Stomach (tissue), 19 donors: ENCODE measurements at regions of chr2 and their contacts with region 1.

Region 1: DNA sequence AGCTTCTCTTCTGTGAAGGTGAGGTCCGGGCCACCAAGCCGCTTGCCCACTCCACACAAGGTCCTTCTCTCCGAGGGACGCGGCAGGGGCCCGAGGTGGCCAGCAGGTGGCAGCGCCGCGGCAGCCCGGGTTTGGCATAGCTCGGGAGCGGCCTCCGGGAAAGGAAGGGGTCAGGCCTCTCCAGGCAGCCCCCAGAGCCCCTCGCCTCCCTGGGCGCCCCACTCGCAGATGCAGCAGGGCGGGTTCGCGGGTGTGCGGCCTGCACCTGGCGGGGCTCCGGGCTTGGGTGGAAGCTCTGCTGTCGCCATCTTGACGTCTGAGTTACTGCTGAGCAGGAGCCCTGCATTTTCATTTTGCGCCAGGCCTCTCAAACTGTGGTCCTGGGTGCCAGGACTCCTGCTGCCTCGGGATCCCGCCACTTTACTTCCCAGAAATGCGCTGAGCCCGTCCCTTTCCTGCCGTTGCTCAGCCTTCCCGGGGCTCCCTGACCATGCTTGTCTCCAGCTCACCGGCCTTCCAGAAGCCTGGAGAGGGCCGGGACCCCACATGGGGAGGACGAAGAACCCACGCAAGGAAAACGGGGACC is 18.6 kb upstream of the NCL start:
- DNase-seq: peak; percentile 80 to 89
- H3K4me3 ChIP-seq: peak overlapping the region; percentile 40 to 59 (median 44)
- H3K27ac ChIP-seq: peak overlapping the region; percentile 62 to 83 (median 72)
- H3K4me1 ChIP-seq: peaks cover 3 to 18% (median 13%) of the 10 kb centered on the region in 4 donors
- H3K27me3 ChIP-seq: no peaks in the 10 kb centered on the region
- CTCF ChIP-seq: peak in 5 of 7 experiments; percentile 63 to 92 (median 86)
- EP300 ChIP-seq: no peak
- POLR2A ChIP-seq: no peak

Region 2: GRCh38 chr2:231557571-231558237 is 74.8 kb after region 1 on chr2:
- intact Hi-C with region 1: loop called (anchors 5 kb)
- DNase-seq: peak; percentile 57 to 94
- H3K4me3 ChIP-seq: no peak overlapping the region
- H3K27ac ChIP-seq: peak overlapping the region; percentile 1 to 67 (median 43)
- H3K4me1 ChIP-seq: peaks cover 6 to 30% (median 13%) of the 10 kb centered on the region in 4 donors
- H3K27me3 ChIP-seq: no peaks in the 10 kb centered on the region
- CTCF ChIP-seq: peak in 5 of 7 experiments; percentile 43 to 89 (median 61)
- EP300 ChIP-seq: no peak
- POLR2A ChIP-seq: no peak

Region 3: DNA sequence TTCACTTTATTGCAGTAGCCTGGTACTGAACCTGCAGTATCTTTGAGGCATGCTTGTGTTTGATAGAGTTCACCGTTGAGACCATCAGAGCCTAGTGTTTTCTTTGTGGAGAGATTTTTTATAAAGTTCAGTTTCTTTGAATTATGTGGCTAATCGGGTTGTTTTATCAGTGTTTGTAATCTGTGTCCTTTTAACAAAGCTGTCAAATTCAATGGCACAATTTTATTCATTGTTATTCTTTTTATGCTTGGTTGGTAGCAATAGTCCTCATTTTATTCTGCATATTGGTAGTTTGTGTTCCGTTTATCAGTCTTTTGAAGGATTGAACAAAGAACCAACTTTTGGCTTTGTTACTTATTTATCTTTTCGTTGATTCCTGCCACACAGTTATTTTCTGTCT is 1344.4 kb after region 1 on chr2:
- intact Hi-C with region 1: no loop called
- DNase-seq: no peak
- H3K4me3 ChIP-seq: no peak overlapping the region
- H3K27ac ChIP-seq: no peak overlapping the region
- H3K4me1 ChIP-seq: no peaks in the 10 kb centered on the region
- H3K27me3 ChIP-seq: no peaks in the 10 kb centered on the region
- CTCF ChIP-seq: no peak
- EP300 ChIP-seq: no peak
- POLR2A ChIP-seq: no peak